ENCODE measurements at regions of chr11 and their contacts with region 1.

Region 1: DNA sequence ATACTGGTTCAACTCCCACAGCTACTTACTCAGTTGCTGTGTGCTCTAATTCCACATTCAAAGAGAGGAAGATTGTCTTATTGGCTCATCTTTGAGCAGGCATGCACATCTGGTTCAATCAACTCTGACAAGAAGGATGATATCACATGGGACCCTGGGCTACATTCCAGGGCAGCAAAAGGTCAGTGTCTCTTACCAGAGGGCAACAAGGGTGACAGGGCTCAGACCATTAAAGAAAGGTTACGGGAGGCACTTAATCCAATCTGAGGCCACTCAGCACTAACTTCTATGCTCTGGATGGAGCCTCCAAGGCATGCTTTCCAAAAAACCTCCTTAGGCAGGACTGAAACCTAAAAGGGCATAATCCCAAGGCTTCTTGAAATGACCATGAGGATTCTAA is 549.4 kb upstream of the API5 start:
- DNase-seq: no peak
- ATAC-seq: no peak

Region 2: DNA sequence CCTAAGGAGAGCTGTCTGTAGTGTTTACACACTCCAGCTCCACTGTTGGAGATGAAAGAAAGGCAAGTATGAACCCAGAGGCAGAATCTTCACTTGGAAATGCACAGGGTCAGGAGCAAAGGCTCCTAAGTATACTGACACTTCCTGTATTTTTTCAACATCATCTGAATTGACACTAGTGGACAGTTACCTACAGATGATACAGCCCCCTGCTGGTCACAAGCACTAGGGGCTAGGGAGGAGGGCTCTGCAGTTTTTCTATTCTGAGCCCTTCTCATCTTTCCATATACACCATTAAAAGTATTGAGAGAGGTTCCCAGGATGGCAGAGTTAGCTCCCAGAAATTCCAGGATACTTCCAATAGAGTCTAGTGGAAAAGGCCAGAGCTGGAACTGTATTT is 259.1 kb after region 1 on chr11:
- intact Hi-C with region 1: loop called (anchors 10 kb)
- DNase-seq: no peak
- ATAC-seq: peak; percentile 70

Region 3: GRCh38 chr11:43130616-43131015 is 368.3 kb after region 1 on chr11:
- intact Hi-C with region 1: loop called (anchors 10 kb)
- DNase-seq: no peak
- ATAC-seq: peak; percentile 64